Calu3 (cell line): ENCODE measurements at regions of chr20 and their contacts with region 1.

Region 1: DNA sequence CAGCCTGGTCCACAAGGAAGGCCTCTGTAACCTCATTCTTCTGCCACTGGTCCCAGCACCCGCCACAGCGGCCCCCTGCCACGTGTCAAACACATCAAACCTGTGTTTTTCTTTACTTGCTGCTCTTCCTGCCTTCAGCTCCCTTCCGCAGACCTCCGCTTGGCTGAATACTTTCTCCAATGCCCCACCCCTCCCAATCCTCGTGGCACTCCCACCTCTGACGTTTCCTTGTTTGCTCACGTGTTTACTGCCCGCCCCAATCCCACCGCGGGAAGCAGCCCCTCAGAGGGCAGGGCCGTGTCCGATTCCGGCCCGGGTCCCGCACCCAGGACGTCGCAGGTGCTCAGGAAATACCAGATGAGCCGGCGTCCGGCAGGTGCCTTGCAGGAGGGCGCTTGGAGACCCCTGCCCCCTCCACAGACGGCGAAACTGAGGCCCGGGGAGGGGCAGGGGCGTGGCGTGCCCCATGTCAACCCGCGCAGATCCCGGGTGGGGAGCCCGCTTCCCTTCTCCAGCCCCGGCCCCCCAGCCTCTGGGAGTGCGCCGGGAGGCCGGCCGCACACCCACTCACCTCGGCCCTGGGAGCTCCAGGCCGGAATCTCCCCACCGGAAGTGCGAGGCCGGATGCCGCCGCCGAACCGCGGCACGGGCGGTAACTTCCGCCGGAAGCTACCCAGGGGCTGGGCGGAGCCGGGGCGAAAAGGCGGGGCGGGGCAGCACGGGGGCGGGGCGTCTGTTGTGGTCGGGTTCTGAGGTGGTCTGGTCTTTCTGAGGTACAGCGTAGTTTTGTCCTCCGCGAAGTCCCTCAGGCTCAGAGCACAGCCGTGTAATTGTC is 42.4 kb downstream of the ELMO2 start:
- DNase-seq: peak; percentile 95
- H3K4me3 Mint-ChIP-seq: peak overlapping the region; percentile 87
- H3K27ac Mint-ChIP-seq: peak overlapping the region; percentile 77
- H3K4me1 Mint-ChIP-seq: peaks cover 39% of the 10 kb centered on the region
- H3K27me3 Mint-ChIP-seq: no peaks in the 10 kb centered on the region
- CTCF ChIP-seq: no peak

Region 2: DNA sequence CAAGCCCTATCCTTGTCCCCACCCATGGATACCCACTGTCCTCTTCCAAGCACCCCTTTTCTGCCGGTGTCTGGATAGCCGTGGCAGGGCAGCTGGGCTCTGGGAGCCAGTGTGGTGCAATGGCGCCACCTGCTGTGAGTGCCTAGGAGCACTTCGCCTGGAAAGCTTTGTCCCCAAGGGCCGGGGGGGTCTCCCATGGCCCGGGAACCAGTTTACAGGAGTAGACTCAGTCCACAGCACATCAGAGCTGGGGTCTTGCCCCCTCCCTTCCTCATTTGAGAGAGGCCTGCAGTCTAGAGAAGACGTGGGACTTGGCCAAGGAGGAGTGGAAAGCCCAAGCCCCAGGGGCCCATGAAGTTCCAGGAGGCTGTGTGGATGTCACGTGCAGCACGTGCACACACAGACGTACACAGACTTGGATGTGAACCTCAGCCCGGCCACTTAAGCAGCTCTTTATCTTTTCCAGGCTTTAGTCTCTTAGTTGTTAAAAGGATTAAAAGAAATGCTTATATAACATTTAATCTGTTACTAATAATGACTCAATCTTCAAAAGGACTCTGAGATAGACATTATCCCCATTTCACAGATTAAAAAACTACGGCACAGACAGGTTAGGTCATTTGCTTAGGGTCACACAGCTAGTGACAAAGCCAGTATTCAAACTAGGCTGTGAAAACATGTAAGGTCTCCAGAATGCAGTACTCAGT is 14.8 kb before region 1 on chr20:
- CTCF ChIA-PET with region 1: interaction called, 12 read pairs
- intact Hi-C with region 1: no loop called
- DNase-seq: peak; percentile 74
- H3K4me3 Mint-ChIP-seq: no peak overlapping the region
- H3K27ac Mint-ChIP-seq: no peak overlapping the region
- H3K4me1 Mint-ChIP-seq: peaks cover 13% of the 10 kb centered on the region
- H3K27me3 Mint-ChIP-seq: peaks cover 14% of the 10 kb centered on the region
- CTCF ChIP-seq: peak; percentile 90

Region 3: DNA sequence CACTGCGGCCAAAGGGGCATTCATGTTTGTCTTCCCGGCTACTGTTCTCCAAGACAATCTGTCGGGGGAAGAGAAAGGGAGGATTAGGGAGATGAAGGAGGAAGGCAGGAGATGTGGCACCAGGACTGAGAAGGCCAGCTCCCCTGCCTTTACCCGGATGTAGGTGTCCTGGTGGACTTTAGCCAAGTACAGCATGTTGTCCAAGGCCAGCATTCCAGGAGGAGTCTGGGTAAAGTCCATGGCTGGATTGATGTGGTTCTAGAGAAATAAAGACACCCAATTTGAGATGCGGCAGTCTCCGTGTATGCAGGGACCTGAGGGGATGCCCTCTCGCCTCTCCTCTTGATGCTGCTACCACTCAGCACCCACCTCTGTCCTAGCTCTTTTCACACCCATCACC is 10.4 kb after region 1 on chr20:
- CTCF ChIA-PET with region 1: interaction called, 10 read pairs
- intact Hi-C with region 1: no loop called
- DNase-seq: no peak
- H3K4me3 Mint-ChIP-seq: no peak overlapping the region
- H3K27ac Mint-ChIP-seq: no peak overlapping the region
- H3K4me1 Mint-ChIP-seq: no peaks in the 10 kb centered on the region
- H3K27me3 Mint-ChIP-seq: no peaks in the 10 kb centered on the region
- CTCF ChIP-seq: no peak